Left ventricle myocardium superior (tissue), 1 donor: ENCODE measurements at regions of chr4 and their contacts with region 1.

Region 1: DNA sequence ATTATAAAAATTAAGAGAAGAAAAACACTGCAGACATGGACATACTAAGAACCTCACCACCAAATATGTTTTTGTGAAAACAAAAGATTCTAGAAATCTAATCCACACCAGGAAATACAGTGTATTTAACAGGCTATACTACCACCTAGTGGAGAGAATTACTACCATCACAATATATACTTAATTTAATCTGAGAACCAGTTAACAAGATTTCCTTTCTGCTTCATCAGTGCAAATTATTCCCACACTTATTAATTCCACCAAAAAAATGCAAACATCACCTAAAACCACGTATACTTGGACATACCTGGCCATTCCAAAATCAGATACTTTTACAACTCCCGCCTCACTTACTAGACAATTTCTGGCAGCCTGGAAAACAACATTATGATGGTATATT is 7.0 kb upstream of the TXK start:
- DNase-seq: no peak
- ATAC-seq: no peak

Region 2: GRCh38 chr4:48269861-48270522 is 128.9 kb after region 1 on chr4:
- intact Hi-C with region 1: loop called (anchors 10 kb)
- DNase-seq: peak; percentile 96
- ATAC-seq: peak; percentile 99

Region 3: DNA sequence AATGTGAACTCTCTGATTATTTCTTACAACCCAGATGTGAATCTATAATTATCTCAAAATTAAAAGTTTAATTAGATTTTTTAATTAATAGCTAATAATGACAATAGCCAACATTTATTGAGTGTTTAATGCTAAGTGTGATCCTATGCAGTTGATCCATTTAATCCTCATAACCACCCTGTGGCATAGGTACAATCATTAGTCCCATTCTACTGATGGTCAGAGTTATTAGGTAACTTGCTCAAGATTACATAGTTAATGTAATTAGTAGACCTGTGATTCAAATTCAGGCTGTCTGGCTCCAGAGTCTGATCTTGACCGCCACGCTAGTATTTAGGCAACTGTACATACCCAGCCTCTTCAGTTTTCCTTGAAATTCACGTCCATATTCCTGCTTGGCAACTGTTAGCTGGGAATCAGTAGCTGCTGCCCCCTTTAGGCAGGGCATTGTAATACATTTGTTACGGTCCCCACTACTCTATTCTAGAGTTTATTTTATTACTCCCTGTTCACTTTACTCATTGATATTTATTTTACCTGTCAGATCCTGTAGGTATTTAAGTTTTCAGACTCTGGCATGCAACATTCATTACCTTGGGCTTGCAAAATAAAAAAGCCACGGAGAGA is 149.2 kb after region 1 on chr4:
- intact Hi-C with region 1: no loop called
- DNase-seq: no peak
- ATAC-seq: no peak